ENCODE measurements at regions of chr9 and their contacts with region 1.

Region 1: GRCh38 chr9:14314929-14315645 is 1.1 kb upstream of the NFIB start:
- DNase-seq: peak; percentile 95

Region 2: GRCh38 chr9:13427587-13427986 is 887.5 kb before region 1 on chr9:
- intact Hi-C with region 1: loop called (anchors 5 kb)
- DNase-seq: no peak

Region 3: GRCh38 chr9:13915591-13916326 is 399.3 kb before region 1 on chr9:
- intact Hi-C with region 1: loop called (anchors 10 kb)
- DNase-seq: no peak

Region 4: GRCh38 chr9:14096258-14096922 is 218.7 kb before region 1 on chr9:
- intact Hi-C with region 1: loop called (anchors 5 kb)
- DNase-seq: no peak

Region 5: DNA sequence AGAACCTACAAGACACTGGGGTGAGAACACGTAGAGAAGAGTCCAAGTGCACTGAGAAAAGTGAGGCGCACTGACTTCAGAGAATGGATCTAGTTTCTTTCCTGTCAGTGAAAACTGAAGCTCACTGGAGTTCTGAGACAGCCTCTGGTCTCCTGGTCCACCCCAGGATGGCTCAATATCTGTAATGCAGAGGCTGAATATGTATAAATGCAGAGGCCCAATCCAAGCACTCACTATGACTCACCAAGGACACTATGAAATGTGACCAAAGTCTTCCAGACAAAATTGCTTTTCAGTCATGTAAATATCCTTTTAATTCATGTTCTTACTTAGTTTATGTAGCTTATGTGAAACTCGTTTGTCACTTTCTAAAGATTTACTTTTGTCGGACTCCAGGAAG is 55.0 kb before region 1 on chr9:
- intact Hi-C with region 1: no loop called
- DNase-seq: no peak

Region 6: DNA sequence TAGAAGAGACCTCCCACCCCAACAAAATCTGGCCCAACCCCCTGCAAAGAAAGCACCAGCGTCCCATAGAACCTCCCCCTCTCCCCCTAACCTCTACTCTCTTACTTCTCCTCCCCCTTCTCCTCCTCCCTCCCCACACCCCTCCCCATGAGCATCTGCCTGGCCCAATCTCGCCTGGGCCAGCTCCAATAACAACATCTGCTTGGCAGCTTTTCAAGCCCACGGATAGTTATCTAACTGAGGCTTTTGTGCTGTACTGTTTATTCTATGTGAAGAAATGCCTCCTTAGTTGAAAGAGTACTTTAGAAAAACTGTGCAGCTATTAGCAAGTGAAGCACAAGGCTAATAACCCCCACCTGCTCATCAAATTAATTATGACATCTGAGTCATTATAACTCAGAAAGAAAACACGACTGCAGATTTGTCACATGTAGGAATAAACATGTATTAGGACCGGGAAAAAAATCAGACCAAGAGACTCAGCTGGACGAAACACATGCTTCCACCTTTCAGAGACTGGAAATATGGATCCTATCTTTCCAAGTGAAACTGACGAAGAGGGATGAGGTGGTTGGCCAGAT is 43.9 kb before region 1 on chr9:
- intact Hi-C with region 1: loop called (anchors 5 kb)
- DNase-seq: no peak